IMR-90 (cell line): ENCODE measurements at regions of chr5 and their contacts with region 1.

Region 1: DNA sequence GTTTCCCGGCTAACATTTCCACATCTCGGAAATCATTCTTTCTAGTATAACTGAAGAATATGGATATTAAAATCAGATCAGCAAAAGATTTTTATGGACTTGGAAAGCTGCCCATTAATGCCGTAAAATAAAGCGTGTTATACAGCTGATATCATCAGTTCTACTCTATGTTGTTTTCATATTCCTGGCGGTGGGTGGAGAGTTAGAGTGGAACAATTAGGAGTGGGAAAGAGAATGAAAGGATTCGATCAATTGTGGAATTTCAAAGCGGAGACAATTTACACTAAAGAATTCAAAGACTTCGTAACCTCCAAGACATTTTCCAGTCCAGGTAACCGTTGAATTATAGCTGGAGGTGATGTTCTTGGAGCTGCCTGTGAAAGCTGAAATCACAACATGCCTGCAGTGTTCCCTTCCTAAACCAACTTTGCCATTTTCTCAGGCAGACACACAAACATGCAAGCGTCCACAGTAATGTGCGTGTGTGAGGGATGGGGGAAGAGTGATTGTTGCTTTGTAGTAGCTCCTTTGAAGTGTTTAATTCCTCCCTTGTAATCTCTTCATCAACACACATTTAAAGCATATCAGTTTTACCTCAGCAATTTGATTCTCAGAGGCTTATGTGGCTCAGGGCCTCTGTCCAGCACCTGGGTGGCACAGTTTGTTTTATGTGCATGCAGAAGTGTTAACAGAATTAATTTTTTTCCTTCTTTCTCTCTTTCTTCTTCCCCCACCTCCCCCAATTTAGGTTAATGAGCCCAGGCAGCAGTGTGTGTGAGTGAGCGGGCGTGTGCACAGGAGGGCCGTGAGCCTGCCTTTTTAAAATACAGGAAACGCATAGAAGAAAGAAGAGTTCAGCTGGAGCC is 544.1 kb downstream of the RAB3C start:
- DNase-seq: peak; percentile 55
- ATAC-seq: peak; percentile 1
- H3K4me3 ChIP-seq: no peak overlapping the region
- H3K27ac ChIP-seq: peak overlapping the region; percentile 99
- H3K4me1 ChIP-seq: peaks cover 20% of the 10 kb centered on the region
- H3K27me3 ChIP-seq: no peaks in the 10 kb centered on the region
- CTCF ChIP-seq: no peak
- POLR2A ChIP-seq: no peak; the same call in 1 of the 2 replicates
- RAD21 ChIP-seq: no peak

Region 2: GRCh38 chr5:59099270-59099994 is 27.5 kb before region 1 on chr5:
- CTCF ChIA-PET with region 1: no interaction called
- POLR2A ChIA-PET with region 1: no interaction called
- dilution Hi-C with region 1: no loop called
- in situ Hi-C with region 1: no loop called
- intact Hi-C with region 1: loop called (anchors 2 kb)
- DNase-seq: peak; percentile 96
- ATAC-seq: peak; percentile 69
- H3K4me3 ChIP-seq: no peak overlapping the region
- H3K27ac ChIP-seq: no peak overlapping the region
- H3K4me1 ChIP-seq: peaks cover 5% of the 10 kb centered on the region; the same call in 1 of the 2 replicates
- H3K27me3 ChIP-seq: no peaks in the 10 kb centered on the region
- CTCF ChIP-seq: no peak
- POLR2A ChIP-seq: no peak; the same call in 1 of the 2 replicates
- RAD21 ChIP-seq: no peak

Region 3: GRCh38 chr5:59116231-59116865 is 10.6 kb before region 1 on chr5:
- CTCF ChIA-PET with region 1: interaction called, 4 read pairs
- POLR2A ChIA-PET with region 1: no interaction called
- dilution Hi-C with region 1: no loop called
- in situ Hi-C with region 1: no loop called
- intact Hi-C with region 1: loop called (anchors 1 kb)
- DNase-seq: peak; percentile 71
- ATAC-seq: peak; percentile 90
- H3K4me3 ChIP-seq: no peak overlapping the region
- H3K27ac ChIP-seq: no peak overlapping the region; the same call in 1 of the 2 replicates
- H3K4me1 ChIP-seq: peaks cover 2% of the 10 kb centered on the region; the same call in 1 of the 2 replicates
- H3K27me3 ChIP-seq: no peaks in the 10 kb centered on the region
- CTCF ChIP-seq: no peak
- POLR2A ChIP-seq: no peak
- RAD21 ChIP-seq: no peak